Endothelial cell of umbilical vein (primary cell): ENCODE measurements at regions of chr14 and their contacts with region 1.

Region 1: GRCh38 chr14:96811985-96812667 is 14.9 kb downstream of the VRK1 start:
- DNase-seq: no peak
- H3K4me3 ChIP-seq: no peak overlapping the region
- H3K27ac ChIP-seq: no peak overlapping the region
- H3K4me1 ChIP-seq: no peaks in the 10 kb centered on the region
- H3K27me3 ChIP-seq: no peaks in the 10 kb centered on the region
- CTCF ChIP-seq: no peak
- POLR2A ChIP-seq: no peak

Region 2: DNA sequence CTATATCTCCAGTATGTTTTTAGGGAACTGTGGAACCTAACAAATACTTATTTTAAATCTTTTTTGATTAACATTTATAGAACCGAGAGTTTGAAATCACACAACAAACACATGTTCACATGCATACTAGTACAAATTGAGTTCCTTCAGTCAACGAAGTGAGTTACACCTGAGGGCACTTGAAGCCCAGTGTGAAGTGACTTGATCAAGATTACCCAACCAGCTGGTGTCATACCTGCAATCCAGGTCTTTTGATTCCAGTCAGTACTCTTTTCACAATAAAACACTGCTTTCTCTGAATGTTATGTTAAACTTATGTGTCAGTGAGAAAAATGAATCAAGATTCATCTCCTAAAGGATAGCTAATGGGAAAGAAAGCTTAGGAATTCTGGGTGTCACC is 20.2 kb after region 1 on chr14:
- CTCF ChIA-PET with region 1: interaction called, 3 read pairs
- POLR2A ChIA-PET with region 1: no interaction called
- dilution Hi-C with region 1: no loop called
- intact Hi-C with region 1: loop called (anchors 2 kb)
- DNase-seq: no peak
- H3K4me3 ChIP-seq: no peak overlapping the region
- H3K27ac ChIP-seq: no peak overlapping the region
- H3K4me1 ChIP-seq: no peaks in the 10 kb centered on the region
- H3K27me3 ChIP-seq: no peaks in the 10 kb centered on the region
- CTCF ChIP-seq: no peak
- POLR2A ChIP-seq: no peak

Region 3: GRCh38 chr14:97033556-97034081 is 221.5 kb after region 1 on chr14:
- CTCF ChIA-PET with region 1: no interaction called
- POLR2A ChIA-PET with region 1: no interaction called
- dilution Hi-C with region 1: no loop called
- intact Hi-C with region 1: no loop called
- DNase-seq: no peak
- H3K4me3 ChIP-seq: no peak overlapping the region
- H3K27ac ChIP-seq: no peak overlapping the region
- H3K4me1 ChIP-seq: no peaks in the 10 kb centered on the region
- H3K27me3 ChIP-seq: no peaks in the 10 kb centered on the region
- CTCF ChIP-seq: no peak
- POLR2A ChIP-seq: no peak